Breast epithelium (tissue), 4 donors: ENCODE measurements at regions of chr1 and their contacts with region 1.

Region 1: GRCh38 chr1:114369927-114370326 is 141.1 kb downstream of the TRIM33 start:
- DNase-seq: no peak
- H3K4me3 ChIP-seq: no peak overlapping the region
- H3K27ac ChIP-seq: no peak overlapping the region
- H3K4me1 ChIP-seq: no peaks in the 10 kb centered on the region
- H3K27me3 ChIP-seq: no peaks in the 10 kb centered on the region
- CTCF ChIP-seq: no peak
- POLR2A ChIP-seq: no peak

Region 2: DNA sequence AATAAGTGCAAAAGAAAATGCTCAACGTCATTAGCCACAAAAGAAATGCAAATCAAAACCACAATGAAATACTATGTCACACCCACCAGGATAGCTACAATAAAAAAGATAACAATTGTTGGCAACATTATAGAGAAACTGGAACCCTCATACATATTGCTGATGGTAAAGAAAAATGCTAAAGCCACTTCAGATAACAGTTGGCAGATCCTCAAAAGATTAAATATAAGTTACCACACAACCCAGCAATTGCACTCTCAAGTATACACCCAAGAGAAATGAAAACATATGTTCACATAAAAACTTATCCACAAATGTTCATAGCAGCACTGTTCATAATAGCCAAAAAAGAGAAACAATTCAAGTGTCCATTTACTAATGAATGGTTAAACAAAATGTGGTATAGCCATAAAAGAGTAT is 120.4 kb after region 1 on chr1:
- intact Hi-C with region 1: no loop called
- DNase-seq: no peak
- H3K4me3 ChIP-seq: no peak overlapping the region
- H3K27ac ChIP-seq: no peak overlapping the region
- H3K4me1 ChIP-seq: no peaks in the 10 kb centered on the region
- H3K27me3 ChIP-seq: no peaks in the 10 kb centered on the region
- CTCF ChIP-seq: no peak
- POLR2A ChIP-seq: no peak

Region 3: GRCh38 chr1:115409097-115410015 is 1039.4 kb after region 1 on chr1:
- intact Hi-C with region 1: loop called (anchors 10 kb)
- DNase-seq: no peak
- H3K4me3 ChIP-seq: no peak overlapping the region
- H3K27ac ChIP-seq: peak overlapping the region in 1 of 2 donors; percentile 26
- H3K4me1 ChIP-seq: no peaks in the 10 kb centered on the region
- H3K27me3 ChIP-seq: no peaks in the 10 kb centered on the region
- CTCF ChIP-seq: no peak
- POLR2A ChIP-seq: no peak